ENCODE measurements at regions of chr11 and their contacts with region 1.

Region 1: GRCh38 chr11:17972987-17973386 is 39.9 kb downstream of the SERGEF start:
- DNase-seq: peak; percentile 14 to 53 (median 41)
- H3K4me3 ChIP-seq: no peak overlapping the region
- H3K27ac ChIP-seq: no peak overlapping the region
- H3K4me1 ChIP-seq: peaks cover 1% of the 10 kb centered on the region
- H3K27me3 ChIP-seq: no peaks in the 10 kb centered on the region
- CTCF ChIP-seq: peak in 1 of 3 donors; percentile 17
- EP300 ChIP-seq: no peak
- POLR2A ChIP-seq: no peak

Region 2: DNA sequence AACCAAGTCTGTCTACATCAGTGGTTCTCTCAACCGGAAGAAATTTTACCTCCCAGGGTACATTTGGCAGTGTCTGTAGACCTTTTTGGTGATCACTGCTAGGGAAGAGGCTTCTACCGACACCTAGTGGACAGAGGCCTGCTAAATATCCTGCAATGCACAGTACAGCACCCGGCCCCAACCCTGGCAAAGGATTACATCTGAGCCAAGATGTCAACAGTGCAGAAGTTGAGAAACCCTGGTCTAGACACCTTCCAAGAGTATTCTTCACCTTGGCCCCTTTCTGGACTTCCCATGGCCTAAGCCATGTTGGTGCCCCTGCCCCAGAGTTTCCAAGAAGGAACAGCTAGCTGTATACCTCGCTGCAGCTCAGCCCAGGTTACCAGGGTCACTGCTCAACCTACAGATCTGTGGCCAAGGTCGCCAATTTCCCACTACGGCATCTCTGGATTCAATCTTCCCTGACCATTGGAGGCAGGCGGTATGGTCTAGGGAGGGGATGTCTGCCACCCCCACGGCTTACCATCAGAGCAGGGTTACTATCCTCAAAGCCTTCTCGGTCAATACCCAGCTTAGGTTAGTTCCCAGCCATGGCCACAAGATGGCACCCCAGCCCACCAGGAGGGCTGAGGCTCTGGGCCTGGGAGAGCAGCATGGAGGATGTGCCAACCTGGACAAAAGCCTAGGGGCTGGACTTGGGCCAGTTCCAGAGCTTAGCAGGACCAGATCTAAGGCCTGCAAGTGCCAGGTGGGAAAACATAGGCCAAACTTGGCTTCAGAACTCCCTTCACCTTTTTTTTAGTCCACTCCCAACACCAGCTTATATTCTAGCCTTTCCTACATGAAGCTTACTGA is 242.2 kb before region 1 on chr11:
- intact Hi-C with region 1: loop called (anchors 2 to 5 kb)
- DNase-seq: peak; percentile 44 to 83 (median 77)
- H3K4me3 ChIP-seq: no peak overlapping the region
- H3K27ac ChIP-seq: no peak overlapping the region
- H3K4me1 ChIP-seq: peaks cover 6% of the 10 kb centered on the region
- H3K27me3 ChIP-seq: no peaks in the 10 kb centered on the region
- CTCF ChIP-seq: peak; percentile 24 to 65 (median 57)
- EP300 ChIP-seq: no peak
- POLR2A ChIP-seq: no peak

Measured in ovary (tissue), 10 donors.